ENCODE measurements at regions of chr15 and their contacts with region 1.

Region 1: GRCh38 chr15:67839929-67840748 is at the start of gene RNU6-1:
- DNase-seq: peak; percentile 95
- total RNA-seq, gene RNU6-1: not detected

Region 2: DNA sequence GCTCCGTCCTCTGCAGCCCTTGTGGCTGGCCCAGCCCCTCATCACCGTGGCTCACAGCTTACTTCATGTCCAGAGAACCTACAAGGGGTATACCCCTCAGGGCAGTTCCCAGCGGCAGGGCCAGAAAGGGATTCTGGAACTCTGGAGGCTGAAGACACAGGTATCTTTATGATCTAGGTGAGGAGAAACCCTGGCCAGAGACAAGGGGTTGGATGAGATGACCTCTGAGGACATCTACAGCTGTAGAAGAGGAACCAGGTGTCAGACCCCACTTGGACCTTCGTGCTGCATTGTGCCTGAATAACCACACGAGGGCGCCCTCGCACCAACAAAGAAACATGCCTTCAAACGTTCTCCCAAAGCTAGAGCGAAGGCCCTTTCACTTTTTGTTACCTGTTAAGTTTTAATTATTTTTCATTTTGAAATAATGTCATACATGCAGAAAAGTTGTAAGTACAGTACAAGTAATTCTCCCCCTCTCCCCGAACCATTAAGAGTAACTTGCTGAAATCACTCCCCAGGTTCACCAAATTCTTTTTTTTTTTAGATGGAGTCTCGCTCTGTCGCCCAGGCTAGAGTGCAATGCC is 893.5 kb before region 1 on chr15:
- intact Hi-C with region 1: loop called (anchors 10 kb)
- DNase-seq: no peak

Region 3: GRCh38 chr15:67456677-67457529 is 383.2 kb before region 1 on chr15:
- intact Hi-C with region 1: loop called (anchors 2 kb)
- DNase-seq: peak; percentile 89

Region 4: DNA sequence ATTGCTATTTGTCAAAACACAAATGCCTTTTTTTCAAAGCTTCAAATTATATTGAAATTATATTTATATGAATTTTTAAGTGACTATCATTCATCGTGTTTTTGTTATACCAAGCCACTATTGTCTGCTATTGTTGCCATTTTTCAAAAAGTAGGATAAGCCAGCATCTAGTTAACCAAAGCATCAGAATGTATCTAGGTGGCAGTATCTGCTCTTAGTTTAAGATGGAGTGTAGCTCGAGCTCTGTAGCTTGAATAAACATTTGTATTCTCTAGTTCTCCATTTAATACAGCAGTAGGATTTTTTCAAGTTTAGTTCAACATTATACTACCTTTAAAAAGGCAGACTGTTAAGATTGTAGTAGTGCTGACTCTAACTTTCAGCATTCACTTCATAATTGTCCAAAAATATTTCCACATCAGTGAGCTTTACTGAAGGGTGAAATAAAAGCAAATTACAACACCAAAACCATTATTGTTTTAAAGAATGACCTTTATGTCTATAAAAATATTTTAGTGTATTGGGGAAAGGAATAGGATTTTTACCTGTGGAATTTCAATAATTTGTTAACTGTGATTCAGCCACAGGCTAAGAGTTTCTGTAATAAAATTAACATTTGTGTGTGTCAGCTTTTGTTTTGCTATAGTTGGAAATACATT is 338.8 kb before region 1 on chr15:
- intact Hi-C with region 1: loop called (anchors 5 kb)
- DNase-seq: no peak

Region 5: GRCh38 chr15:67521029-67521811 is 318.9 kb before region 1 on chr15 and contains the start of gene C15orf61:
- intact Hi-C with region 1: loop called (anchors 5 kb)
- DNase-seq: peak; percentile 90
- total RNA-seq, gene C15orf61: 7.6 TPM

Region 6: DNA sequence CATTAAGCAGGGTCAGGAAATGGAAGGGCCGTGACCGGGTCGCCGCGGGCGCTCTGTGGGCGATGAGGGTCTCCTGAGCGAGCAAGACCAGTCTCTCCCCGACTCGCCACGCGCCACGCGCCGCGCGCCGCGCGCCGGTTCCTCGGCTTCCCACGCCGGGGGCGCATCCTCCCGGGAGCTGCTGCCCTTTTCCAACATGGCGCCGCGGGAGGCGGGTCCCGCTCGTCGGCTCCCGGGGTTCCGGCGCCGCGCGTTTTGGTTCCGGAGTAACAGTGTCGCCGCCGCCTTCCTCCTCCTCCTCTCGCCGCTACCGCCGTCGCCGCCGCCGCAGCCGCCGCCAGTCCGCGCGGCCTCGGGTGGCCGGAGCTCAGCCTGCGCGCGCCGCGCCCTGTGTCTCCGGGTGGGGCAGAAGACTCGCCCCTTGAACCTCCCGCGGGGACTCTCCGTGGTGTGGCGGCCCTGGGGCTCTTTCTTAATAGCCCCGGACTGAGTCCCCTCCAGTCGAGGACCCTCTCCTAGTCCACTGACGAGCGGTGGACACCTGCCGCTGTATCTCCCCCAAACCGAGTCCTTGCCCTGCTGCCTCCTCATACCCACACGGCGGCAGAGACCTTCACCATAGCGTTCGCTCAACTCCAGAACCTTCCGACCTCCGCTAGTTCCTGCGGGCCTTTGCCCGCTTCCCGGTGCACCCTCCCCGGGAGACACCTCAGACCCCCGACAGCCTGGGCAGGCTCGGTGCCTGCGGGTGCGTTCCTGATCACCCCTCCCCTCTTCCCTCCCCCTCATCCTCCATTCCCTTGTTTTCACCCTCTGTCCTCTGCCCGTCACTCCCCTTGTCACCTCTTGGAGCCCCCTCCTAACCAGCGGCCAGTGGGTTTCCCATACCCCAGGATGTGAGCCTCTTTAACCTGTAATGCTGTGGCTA is 297.5 kb before region 1 on chr15 and contains the start of gene MAP2K5:
- intact Hi-C with region 1: loop called (anchors 2 kb)
- DNase-seq: peak; percentile 94
- total RNA-seq, gene MAP2K5: 28.2 TPM

Region 7: DNA sequence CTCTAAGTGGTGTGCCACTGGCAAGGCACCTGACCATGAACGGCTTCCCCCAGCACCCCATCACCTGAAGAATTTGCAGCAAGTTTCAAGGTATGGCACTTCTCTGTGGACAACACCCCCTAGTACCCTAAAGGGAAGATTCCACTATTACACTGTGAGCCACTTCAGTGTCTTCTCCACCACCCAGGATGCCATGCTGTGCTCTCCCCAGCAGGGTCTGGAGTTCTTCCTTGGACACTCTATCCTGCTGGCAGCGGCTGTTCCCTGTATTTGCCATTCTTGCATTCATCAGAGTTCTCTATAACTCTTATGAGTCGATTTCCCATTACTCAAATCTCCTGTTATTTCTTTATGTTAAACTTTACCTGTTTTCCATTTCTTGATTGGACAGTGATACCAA is 33.6 kb after region 1 on chr15:
- intact Hi-C with region 1: no loop called
- DNase-seq: no peak